Vagina (tissue), 2 donors: ENCODE measurements at regions of chr2 and their contacts with region 1.

Region 1: DNA sequence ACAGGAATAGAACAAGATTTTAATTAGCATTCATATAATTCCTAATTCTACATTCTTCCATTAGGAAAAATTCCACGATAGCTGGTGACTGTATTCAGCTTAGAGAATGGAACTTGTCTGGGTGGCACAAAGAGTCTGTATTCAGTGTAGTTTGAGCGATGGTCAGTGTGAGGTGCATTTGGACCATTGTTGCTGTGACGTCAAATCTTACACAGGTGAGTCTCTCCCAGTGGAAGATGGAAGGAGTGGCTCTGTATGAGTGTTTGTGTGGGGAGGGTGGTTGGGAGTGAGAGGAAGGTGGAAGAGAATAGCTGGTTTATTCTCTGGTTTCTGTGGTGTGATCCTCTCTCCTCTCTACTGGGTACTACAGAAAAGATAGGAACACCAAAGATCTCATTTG is 1038.6 kb downstream of the CNTNAP5 start:
- DNase-seq: no peak
- H3K4me3 ChIP-seq: no peak overlapping the region
- H3K27ac ChIP-seq: no peak overlapping the region
- H3K4me1 ChIP-seq: no peaks in the 10 kb centered on the region
- H3K27me3 ChIP-seq: no peaks in the 10 kb centered on the region
- CTCF ChIP-seq: no peak
- POLR2A ChIP-seq: no peak

Region 2: DNA sequence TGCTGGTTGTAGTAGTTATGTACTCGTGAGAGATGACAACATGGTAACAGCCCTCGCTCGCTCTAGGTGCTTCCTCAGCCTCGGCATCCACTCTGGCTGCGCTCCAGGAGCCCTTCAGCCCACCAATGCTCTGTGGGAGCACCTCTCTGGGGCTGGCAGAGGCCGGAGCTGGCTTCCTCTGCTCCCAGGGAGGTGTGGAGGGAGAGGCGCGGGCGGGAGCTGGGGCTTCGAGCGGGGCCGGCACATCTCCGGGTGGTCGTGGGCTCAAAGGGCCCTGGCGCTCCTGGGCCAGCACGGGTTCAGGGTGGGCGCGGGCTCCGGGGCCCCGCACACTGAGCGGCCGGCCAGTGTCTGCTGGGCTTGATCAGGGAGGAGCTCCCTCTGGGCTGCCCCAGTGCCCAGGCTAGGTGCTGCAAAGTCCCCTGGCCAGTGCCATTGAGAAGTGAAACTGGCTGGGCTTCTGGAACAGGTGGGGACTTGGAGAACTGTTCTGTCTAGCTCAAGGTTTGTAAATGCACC is 26.5 kb before region 1 on chr2:
- intact Hi-C with region 1: no loop called
- DNase-seq: no peak
- H3K4me3 ChIP-seq: no peak overlapping the region
- H3K27ac ChIP-seq: no peak overlapping the region
- H3K4me1 ChIP-seq: no peaks in the 10 kb centered on the region
- H3K27me3 ChIP-seq: no peaks in the 10 kb centered on the region
- CTCF ChIP-seq: no peak
- POLR2A ChIP-seq: no peak

Region 3: DNA sequence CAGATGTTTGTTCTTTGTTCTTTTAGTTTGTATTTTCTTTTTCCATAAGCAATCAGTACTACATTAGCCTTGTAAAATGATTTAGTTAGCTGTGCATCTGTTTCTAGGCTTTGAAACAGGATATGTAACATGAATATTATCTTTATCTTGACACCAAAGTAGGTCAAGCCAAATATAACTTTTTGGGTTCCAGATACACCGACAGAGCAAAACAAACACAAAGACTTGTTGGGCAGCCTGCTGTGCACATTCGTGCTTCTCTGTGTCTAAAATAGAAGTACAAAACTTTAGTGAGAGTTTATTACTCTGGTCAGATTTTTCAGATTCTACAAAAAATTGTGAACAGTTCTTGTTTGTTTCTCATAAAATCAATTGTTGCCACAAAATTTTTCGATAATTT is 532.9 kb after region 1 on chr2:
- intact Hi-C with region 1: loop called (anchors 10 kb)
- DNase-seq: no peak
- H3K4me3 ChIP-seq: no peak overlapping the region
- H3K27ac ChIP-seq: no peak overlapping the region
- H3K4me1 ChIP-seq: no peaks in the 10 kb centered on the region
- H3K27me3 ChIP-seq: no peaks in the 10 kb centered on the region
- CTCF ChIP-seq: no peak
- POLR2A ChIP-seq: no peak

Region 4: GRCh38 chr2:125901278-125901677 is 837.6 kb after region 1 on chr2:
- intact Hi-C with region 1: no loop called
- DNase-seq: no peak
- H3K4me3 ChIP-seq: no peak overlapping the region
- H3K27ac ChIP-seq: no peak overlapping the region
- H3K4me1 ChIP-seq: no peaks in the 10 kb centered on the region
- H3K27me3 ChIP-seq: no peaks in the 10 kb centered on the region
- CTCF ChIP-seq: no peak
- POLR2A ChIP-seq: no peak